Heart right ventricle (tissue), 16 donors: ENCODE measurements at regions of chr1 and their contacts with region 1.

Region 1: DNA sequence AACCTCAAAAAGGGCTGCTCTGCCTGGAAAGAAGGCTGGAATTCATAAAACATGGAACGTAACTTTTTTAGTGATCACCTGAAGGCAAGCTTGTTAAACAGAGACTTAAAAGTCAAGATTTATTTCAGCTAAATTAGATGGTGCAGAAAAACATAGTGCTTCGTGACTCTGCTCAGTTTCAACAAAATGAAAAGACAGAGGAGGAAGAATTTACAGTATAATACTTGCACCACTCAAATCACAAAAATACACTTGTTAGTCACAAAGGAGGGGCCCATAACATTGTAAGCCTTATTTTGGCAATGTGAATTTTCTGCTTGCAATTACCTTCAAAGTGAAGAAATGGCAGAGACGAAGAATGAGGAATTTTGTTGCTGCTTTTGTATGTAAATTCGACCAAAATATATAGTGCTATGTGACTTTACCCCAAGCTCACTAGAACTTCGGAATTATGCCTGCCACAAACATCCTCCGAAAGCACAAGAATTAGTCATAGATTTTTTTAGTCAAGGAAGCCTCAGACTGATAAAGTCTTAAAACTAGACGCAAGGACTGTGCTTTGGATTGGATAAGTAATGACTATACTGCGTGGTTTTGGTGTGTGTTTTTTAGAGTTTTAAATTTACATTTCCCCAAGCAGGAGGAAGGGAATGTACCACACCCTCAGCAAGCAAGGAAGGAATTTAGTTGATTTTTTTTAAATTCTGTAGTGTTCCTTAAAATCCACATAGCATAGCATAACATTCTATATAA is 10.5 kb downstream of the WLS start:
- DNase-seq: no peak
- ATAC-seq: no peak
- H3K4me3 ChIP-seq: no peak overlapping the region
- H3K27ac ChIP-seq: peak overlapping the region in 3 of 10 donors; percentile 3 to 33 (median 31)
- H3K4me1 ChIP-seq: peaks cover 0 to 72% (median 35%) of the 10 kb centered on the region in 9 donors
- H3K27me3 ChIP-seq: no peaks in the 10 kb centered on the region
- CTCF ChIP-seq: no peak

Region 2: DNA sequence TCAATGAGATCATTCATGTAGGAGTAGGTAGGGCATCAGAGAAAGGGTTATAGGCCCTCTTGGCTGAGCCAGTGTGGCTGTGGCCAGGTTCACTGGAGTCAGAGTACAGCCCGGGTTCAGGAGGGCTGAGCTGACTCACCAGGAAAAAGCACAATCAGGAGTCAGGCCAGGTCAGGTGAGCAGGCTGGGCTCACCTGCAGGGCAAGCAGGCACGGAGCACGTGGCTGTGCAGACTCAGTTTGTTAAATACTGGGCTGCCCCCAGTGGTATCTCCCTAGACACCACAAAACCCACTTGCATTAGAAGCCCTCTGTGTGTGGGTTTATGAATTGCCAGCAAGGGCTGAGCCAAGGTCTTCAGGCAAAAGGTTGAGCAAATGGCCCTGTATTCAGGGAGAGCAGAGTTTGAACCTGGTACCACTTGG is 669.4 kb before region 1 on chr1:
- intact Hi-C with region 1: no loop called
- DNase-seq: no peak
- ATAC-seq: no peak
- H3K4me3 ChIP-seq: no peak overlapping the region
- H3K27ac ChIP-seq: no peak overlapping the region
- H3K4me1 ChIP-seq: no peaks in the 10 kb centered on the region
- H3K27me3 ChIP-seq: peaks cover 0 to 3% (median 0%) of the 10 kb centered on the region in 7 donors
- CTCF ChIP-seq: no peak

Region 3: GRCh38 chr1:68141071-68142021 is 80.5 kb before region 1 on chr1:
- intact Hi-C with region 1: loop called in 2 of 10 experiments (anchors 5 to 10 kb)
- DNase-seq: no peak
- ATAC-seq: peak; percentile 31 to 53 (median 47)
- H3K4me3 ChIP-seq: no peak overlapping the region
- H3K27ac ChIP-seq: peak overlapping the region in 9 of 10 donors; percentile 10 to 65 (median 41)
- H3K4me1 ChIP-seq: peaks cover 5 to 30% (median 15%) of the 10 kb centered on the region in 9 donors
- H3K27me3 ChIP-seq: no peaks in the 10 kb centered on the region
- CTCF ChIP-seq: no peak